Caco-2 (cell line): ENCODE measurements at regions of chr1 and their contacts with region 1.

Region 1: GRCh38 chr1:200620273-200621131 is at the start of gene KIF14:
- DNase-seq: peak; percentile 94 to 95
- H3K4me3 ChIP-seq: peak within 1 kb of the TSS; percentile 85
- H3K4me3 Mint-ChIP-seq: peak within 1 kb of the TSS; percentile 94
- H3K27ac Mint-ChIP-seq: peak within 1 kb of the TSS; percentile 92
- H3K4me1 ChIP-seq: 0 out of 2 replicates have a peak, but pooled peaks cover 3% of the 10 kb centered on the region
- H3K4me1 Mint-ChIP-seq: peaks cover 7% of the 10 kb centered on the region
- H3K27me3 ChIP-seq: no peaks in the 10 kb centered on the region
- H3K27me3 Mint-ChIP-seq: no peaks in the 10 kb centered on the region
- CTCF ChIP-seq: no peak
- total RNA-seq, gene KIF14: 11.6 and 12.3 TPM in 2 replicates

Region 2: GRCh38 chr1:199867601-199868000 is 752.9 kb before region 1 on chr1:
- CTCF ChIA-PET with region 1: no interaction called
- POLR2A ChIA-PET with region 1: no interaction called
- intact Hi-C with region 1: no loop called
- DNase-seq: no peak
- H3K4me3 ChIP-seq: no peak overlapping the region
- H3K4me3 Mint-ChIP-seq: no peak overlapping the region
- H3K27ac Mint-ChIP-seq: no peak overlapping the region
- H3K4me1 ChIP-seq: peaks cover 6% of the 10 kb centered on the region; the same call in 1 of the 2 replicates
- H3K4me1 Mint-ChIP-seq: no peaks in the 10 kb centered on the region
- H3K27me3 ChIP-seq: no peaks in the 10 kb centered on the region
- H3K27me3 Mint-ChIP-seq: no peaks in the 10 kb centered on the region
- CTCF ChIP-seq: no peak

Region 3: DNA sequence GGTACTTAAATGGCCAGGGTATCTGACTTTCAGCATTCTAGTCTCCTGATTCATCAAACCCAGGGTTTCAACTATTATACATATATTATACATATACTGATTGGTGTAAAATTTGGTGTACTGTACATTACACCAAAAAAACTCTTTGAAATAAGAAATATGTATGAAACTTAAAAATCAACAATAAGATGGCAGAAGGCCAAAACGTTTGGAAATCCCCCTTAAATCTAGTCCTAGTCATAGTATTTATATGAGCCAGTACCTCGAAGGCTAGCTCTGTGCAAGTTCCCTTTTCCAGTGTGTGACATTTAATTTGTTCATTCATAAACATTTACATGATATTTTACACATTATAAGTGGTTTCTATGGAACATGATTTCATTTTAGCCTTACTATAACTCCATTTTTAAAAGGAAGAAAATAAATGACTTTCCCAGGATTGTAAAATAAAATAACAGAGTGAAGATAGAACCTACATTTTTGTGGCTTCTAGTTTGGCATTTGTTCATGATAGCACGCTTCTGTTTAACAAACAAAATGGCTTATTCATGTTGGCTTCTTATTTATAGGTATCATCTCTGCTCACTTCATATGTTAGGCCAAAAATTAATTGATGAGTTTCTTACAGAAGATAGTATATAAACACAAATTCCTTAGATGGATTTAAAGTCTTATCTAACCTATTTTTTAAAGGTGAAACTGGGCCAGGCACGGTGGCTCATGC is 191.9 kb before region 1 on chr1:
- CTCF ChIA-PET with region 1: no interaction called
- POLR2A ChIA-PET with region 1: no interaction called
- intact Hi-C with region 1: no loop called
- DNase-seq: no peak
- H3K4me3 ChIP-seq: no peak overlapping the region
- H3K4me3 Mint-ChIP-seq: no peak overlapping the region
- H3K27ac Mint-ChIP-seq: no peak overlapping the region
- H3K4me1 ChIP-seq: peaks cover 9% of the 10 kb centered on the region
- H3K4me1 Mint-ChIP-seq: peaks cover 8% of the 10 kb centered on the region
- H3K27me3 ChIP-seq: no peaks in the 10 kb centered on the region
- H3K27me3 Mint-ChIP-seq: no peaks in the 10 kb centered on the region
- CTCF ChIP-seq: no peak

Region 4: DNA sequence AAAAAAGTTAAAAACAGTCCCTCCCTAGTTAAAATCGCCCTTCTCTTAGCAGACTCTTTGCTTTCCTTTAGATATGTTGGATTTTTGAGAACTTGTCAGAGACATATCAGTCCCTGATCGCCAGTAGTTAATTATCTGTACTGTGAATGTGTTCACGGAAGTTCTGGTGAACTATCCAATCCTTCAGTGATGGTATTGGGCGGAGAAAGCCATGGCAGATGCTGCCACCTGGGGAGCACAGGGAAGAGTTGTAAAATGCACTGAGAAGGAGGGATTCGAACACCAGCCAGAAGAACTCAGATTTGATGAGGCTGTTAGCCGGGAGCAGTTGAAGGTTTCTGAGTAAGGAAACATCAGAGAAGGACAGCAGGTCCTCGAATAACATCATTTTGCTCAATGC is 17.6 kb after region 1 on chr1:
- CTCF ChIA-PET with region 1: interaction called, 4 read pairs
- POLR2A ChIA-PET with region 1: no interaction called
- intact Hi-C with region 1: loop called (anchors 1 kb)
- DNase-seq: no peak
- H3K4me3 ChIP-seq: no peak overlapping the region
- H3K4me3 Mint-ChIP-seq: no peak overlapping the region
- H3K27ac Mint-ChIP-seq: peak overlapping the region; percentile 2
- H3K4me1 ChIP-seq: peaks cover 13% of the 10 kb centered on the region; the same call in 1 of the 2 replicates
- H3K4me1 Mint-ChIP-seq: peaks cover 14% of the 10 kb centered on the region
- H3K27me3 ChIP-seq: no peaks in the 10 kb centered on the region
- H3K27me3 Mint-ChIP-seq: no peaks in the 10 kb centered on the region
- CTCF ChIP-seq: no peak

Region 5: DNA sequence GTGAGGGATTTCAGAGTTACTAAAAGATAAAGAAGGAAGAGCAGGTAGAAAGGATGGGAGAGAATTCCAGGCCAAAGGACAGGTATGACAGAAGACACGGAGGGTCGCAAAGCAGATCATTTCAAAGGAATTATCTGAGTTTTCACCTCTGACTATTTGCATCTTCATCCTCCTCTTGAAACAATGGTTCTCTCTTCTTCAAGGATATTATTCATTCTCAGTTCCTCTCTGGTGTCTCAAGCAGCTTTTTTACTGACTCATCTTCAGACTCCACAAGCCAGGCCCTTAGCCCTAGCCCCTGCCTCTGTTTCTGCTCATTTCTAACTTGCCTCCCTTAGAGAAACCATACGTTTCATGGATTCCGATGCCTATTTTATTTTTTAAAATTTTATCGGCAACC is 34.2 kb after region 1 on chr1:
- CTCF ChIA-PET with region 1: no interaction called
- POLR2A ChIA-PET with region 1: no interaction called
- intact Hi-C with region 1: no loop called
- DNase-seq: no peak
- H3K4me3 ChIP-seq: no peak overlapping the region
- H3K4me3 Mint-ChIP-seq: no peak overlapping the region
- H3K27ac Mint-ChIP-seq: peak overlapping the region; percentile 41
- H3K4me1 ChIP-seq: peaks cover 26% of the 10 kb centered on the region
- H3K4me1 Mint-ChIP-seq: peaks cover 37% of the 10 kb centered on the region
- H3K27me3 ChIP-seq: no peaks in the 10 kb centered on the region
- H3K27me3 Mint-ChIP-seq: no peaks in the 10 kb centered on the region
- CTCF ChIP-seq: no peak

Region 6: DNA sequence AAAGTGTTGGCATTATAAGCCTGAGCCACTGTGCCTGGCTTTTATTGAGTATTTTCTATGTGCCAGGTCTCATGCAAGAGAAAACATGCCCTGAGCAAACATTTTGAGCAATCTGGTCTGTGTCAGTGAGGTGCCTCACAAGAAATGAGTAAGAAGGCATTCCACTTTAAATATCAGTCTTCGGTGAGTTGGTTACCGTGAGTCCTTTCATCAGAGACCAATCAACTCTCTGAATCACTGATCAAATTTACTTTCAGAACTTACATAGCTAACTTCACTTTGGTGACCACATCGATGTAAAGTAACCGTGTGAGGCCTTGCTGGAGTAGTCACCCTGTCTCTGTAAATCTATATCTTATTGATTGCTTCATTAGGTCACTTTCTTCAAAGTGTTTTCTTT is 63.5 kb after region 1 on chr1:
- CTCF ChIA-PET with region 1: no interaction called
- POLR2A ChIA-PET with region 1: interaction called, 16 read pairs
- intact Hi-C with region 1: no loop called
- DNase-seq: no peak
- H3K4me3 ChIP-seq: no peak overlapping the region
- H3K4me3 Mint-ChIP-seq: no peak overlapping the region
- H3K27ac Mint-ChIP-seq: no peak overlapping the region
- H3K4me1 ChIP-seq: no peaks in the 10 kb centered on the region
- H3K4me1 Mint-ChIP-seq: no peaks in the 10 kb centered on the region
- H3K27me3 ChIP-seq: no peaks in the 10 kb centered on the region
- H3K27me3 Mint-ChIP-seq: no peaks in the 10 kb centered on the region
- CTCF ChIP-seq: no peak

Region 7: GRCh38 chr1:200751717-200752116 is 131.2 kb after region 1 on chr1:
- CTCF ChIA-PET with region 1: interaction called, 3 read pairs
- POLR2A ChIA-PET with region 1: no interaction called
- intact Hi-C with region 1: loop called (anchors 5 kb)
- DNase-seq: no peak
- H3K4me3 ChIP-seq: no peak overlapping the region
- H3K4me3 Mint-ChIP-seq: no peak overlapping the region
- H3K27ac Mint-ChIP-seq: no peak overlapping the region
- H3K4me1 ChIP-seq: no peaks in the 10 kb centered on the region
- H3K4me1 Mint-ChIP-seq: peaks cover 14% of the 10 kb centered on the region
- H3K27me3 ChIP-seq: no peaks in the 10 kb centered on the region
- H3K27me3 Mint-ChIP-seq: no peaks in the 10 kb centered on the region
- CTCF ChIP-seq: no peak

Region 8: GRCh38 chr1:200837931-200838571 is 217.5 kb after region 1 on chr1:
- CTCF ChIA-PET with region 1: interaction called, 8 read pairs
- POLR2A ChIA-PET with region 1: no interaction called
- intact Hi-C with region 1: loop called (anchors 1 kb)
- DNase-seq: no peak
- H3K4me3 ChIP-seq: no peak overlapping the region
- H3K4me3 Mint-ChIP-seq: no peak overlapping the region
- H3K27ac Mint-ChIP-seq: no peak overlapping the region
- H3K4me1 ChIP-seq: no peaks in the 10 kb centered on the region
- H3K4me1 Mint-ChIP-seq: no peaks in the 10 kb centered on the region
- H3K27me3 ChIP-seq: no peaks in the 10 kb centered on the region
- H3K27me3 Mint-ChIP-seq: no peaks in the 10 kb centered on the region
- CTCF ChIP-seq: peak; percentile 4 to 28

Region 9: DNA sequence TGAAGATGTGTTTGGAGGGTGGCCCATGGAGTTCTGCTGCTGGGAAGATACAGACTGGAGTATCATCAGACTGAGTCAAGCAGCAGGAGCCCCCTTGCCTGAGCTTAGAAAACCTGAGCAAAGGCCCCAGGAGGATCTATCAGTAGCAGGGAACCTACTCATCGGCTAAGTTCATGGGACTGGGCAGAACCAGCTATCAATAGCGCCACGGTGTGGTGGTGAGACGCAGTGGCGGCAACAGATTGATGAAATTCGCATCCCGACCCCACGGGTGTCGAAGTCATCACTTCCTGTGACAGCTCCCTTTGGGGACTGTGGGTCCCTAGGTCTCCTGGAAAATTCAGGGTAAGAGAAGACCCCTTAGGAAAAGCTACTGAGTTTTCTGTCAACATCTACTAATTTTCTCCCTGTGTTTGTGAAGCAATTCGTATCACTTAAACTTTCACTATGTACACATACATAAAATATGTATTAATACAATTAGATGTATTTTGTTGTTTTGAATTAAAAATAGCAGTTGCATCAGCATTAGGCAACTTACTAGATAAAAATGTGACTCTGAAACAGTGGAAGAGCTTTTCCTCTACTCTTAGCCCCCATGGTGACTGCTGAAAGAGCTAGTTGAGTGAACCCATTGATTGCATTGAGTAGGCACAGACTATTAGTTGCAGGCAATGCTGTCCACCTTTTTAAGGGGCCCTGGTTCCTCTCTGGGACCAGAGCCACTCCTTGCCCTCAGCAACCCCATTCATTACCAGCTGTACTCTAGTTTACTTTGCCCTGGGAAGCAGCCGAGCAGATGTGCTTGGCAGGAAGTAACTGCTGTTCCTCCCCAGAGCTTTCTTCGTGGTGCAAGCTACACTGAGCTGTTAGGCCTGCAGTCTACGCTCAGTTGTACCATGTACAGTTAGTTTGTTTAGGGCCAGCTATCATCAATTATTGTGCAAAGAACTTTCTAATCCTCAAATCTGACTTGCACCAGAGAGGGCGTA is 499.0 kb after region 1 on chr1:
- CTCF ChIA-PET with region 1: no interaction called
- POLR2A ChIA-PET with region 1: no interaction called
- intact Hi-C with region 1: no loop called
- DNase-seq: peak in 1 of 2 experiments; percentile 42
- H3K4me3 ChIP-seq: no peak overlapping the region
- H3K4me3 Mint-ChIP-seq: no peak overlapping the region
- H3K27ac Mint-ChIP-seq: no peak overlapping the region
- H3K4me1 ChIP-seq: no peaks in the 10 kb centered on the region
- H3K4me1 Mint-ChIP-seq: no peaks in the 10 kb centered on the region
- H3K27me3 ChIP-seq: no peaks in the 10 kb centered on the region; the same call in 1 of the 2 replicates
- H3K27me3 Mint-ChIP-seq: peaks cover 2% of the 10 kb centered on the region
- CTCF ChIP-seq: peak; percentile 36 to 49